Motor neuron (in vitro differentiated cells): ENCODE measurements at regions of chr17 and their contacts with region 1.

Region 1: DNA sequence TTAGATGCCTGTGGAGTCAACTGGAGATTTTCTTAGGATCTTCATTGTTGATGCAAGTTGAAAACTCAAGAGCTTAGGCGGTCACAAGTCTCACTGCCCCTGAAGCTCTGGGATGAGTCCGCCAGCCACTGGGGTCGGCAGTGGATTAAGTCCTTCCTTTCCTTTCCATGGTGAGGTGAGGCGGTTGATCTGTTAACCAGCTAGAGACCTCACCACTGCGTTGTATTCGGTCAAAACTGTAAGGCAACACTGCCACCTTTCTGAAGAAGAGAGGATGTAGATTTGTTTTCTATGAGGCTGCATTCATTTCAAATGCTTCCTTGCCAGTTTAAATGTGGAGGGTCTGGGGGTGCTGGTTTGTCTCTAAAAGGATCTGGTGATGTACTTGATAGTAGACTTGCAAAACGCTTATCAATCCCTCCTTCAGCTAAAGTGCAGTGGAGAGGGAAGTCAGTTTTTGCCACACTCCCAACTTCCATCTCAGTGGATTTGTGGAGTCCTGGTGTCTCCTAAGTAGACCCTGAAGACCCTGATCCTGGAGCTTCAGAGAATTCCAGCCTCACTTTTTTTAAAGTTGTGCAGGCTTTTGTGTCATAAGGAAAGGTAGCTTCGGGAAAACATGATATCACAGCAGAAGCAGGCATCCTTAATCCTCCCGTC is 1.7 kb downstream of the MYOCD start:
- ATAC-seq: peak in 7 of 8 experiments; percentile 44 to 72 (median 64)
- H3K4me3 ChIP-seq: no peak overlapping the region
- H3K27ac ChIP-seq: no peak overlapping the region
- H3K4me1 ChIP-seq: peaks cover 5 to 8% of the 10 kb centered on the region in 2 donors

Region 2: DNA sequence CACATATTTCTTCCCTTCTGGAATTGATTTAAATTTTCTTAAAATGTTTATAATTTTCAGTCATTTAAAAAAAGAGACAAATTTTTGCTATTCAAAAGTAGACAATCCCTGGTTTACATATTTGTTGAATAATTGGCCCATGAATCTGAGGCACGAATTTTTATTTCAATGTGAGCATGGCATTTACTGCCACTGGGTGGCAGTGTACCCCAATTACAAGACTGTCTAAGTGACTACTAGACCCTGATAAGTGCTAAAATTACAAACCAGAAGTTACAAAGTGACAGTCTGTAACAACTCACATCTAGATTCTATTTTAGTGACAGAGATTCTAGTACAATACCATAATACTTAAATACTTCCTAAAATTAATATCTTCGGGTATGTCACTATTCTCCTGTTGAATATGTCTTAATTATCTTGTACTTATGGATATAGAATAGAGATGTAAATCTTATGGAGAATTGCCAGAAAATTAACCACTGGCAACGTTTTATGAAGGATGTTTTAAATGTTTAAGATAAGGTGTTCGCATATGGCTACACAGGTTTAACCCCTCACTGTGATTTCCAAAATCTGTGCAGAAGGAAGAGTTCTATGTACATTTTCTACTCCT is 410.9 kb before region 1 on chr17:
- in situ Hi-C with region 1: loop called in 1 of 9 experiments (anchors 10 kb)
- ATAC-seq: peak in 5 of 8 experiments; percentile 42 to 81 (median 70)
- H3K4me3 ChIP-seq: no peak overlapping the region
- H3K27ac ChIP-seq: no peak overlapping the region
- H3K4me1 ChIP-seq: no peaks in the 10 kb centered on the region